IMR-90 (cell line): ENCODE measurements at regions of chr18 and their contacts with region 1.

Region 1: GRCh38 chr18:21155443-21155842 is 43.8 kb upstream of the ROCK1 start:
- DNase-seq: no peak
- ATAC-seq: no peak
- H3K4me3 ChIP-seq: no peak overlapping the region
- H3K27ac ChIP-seq: no peak overlapping the region
- H3K4me1 ChIP-seq: no peaks in the 10 kb centered on the region
- H3K27me3 ChIP-seq: no peaks in the 10 kb centered on the region
- CTCF ChIP-seq: no peak
- POLR2A ChIP-seq: no peak
- RAD21 ChIP-seq: no peak

Region 2: GRCh38 chr18:21141668-21142422 is 13.6 kb before region 1 on chr18:
- CTCF ChIA-PET with region 1: no interaction called
- POLR2A ChIA-PET with region 1: no interaction called
- dilution Hi-C with region 1: no loop called
- in situ Hi-C with region 1: no loop called
- intact Hi-C with region 1: loop called (anchors 1 kb)
- DNase-seq: peak; percentile 42
- ATAC-seq: peak; percentile 89
- H3K4me3 ChIP-seq: no peak overlapping the region
- H3K27ac ChIP-seq: peak overlapping the region; percentile 10; the same call in 1 of the 2 replicates
- H3K4me1 ChIP-seq: peaks cover 5% of the 10 kb centered on the region; the same call in 1 of the 2 replicates
- H3K27me3 ChIP-seq: no peaks in the 10 kb centered on the region
- CTCF ChIP-seq: no peak
- POLR2A ChIP-seq: no peak
- RAD21 ChIP-seq: no peak